MCF 10A (cell line): ENCODE measurements at regions of chr22 and their contacts with region 1.

Region 1: GRCh38 chr22:29603358-29604075 is at the start of gene NF2:
- DNase-seq: peak; percentile 41
- H3K4me3 Mint-ChIP-seq: peak within 1 kb of the TSS; percentile 87
- H3K27ac Mint-ChIP-seq: peak within 1 kb of the TSS; percentile 98
- H3K4me1 Mint-ChIP-seq: peaks cover 5% of the 10 kb centered on the region
- H3K27me3 Mint-ChIP-seq: no peaks in the 10 kb centered on the region
- CTCF ChIP-seq: no peak
- total RNA-seq, gene NF2: 92.4 and 98.3 TPM in 2 replicates

Region 2: GRCh38 chr22:29108109-29108508 is 495.4 kb before region 1 on chr22:
- CTCF ChIA-PET with region 1: no interaction called
- POLR2A ChIA-PET with region 1: no interaction called
- intact Hi-C with region 1: no loop called
- DNase-seq: peak; percentile 40
- H3K4me3 Mint-ChIP-seq: no peak overlapping the region
- H3K27ac Mint-ChIP-seq: no peak overlapping the region
- H3K4me1 Mint-ChIP-seq: no peaks in the 10 kb centered on the region
- H3K27me3 Mint-ChIP-seq: no peaks in the 10 kb centered on the region
- CTCF ChIP-seq: no peak

Region 3: GRCh38 chr22:29300807-29301601 is 302.5 kb before region 1 on chr22:
- CTCF ChIA-PET with region 1: no interaction called
- POLR2A ChIA-PET with region 1: no interaction called
- intact Hi-C with region 1: no loop called
- DNase-seq: peak; percentile 22
- H3K4me3 Mint-ChIP-seq: no peak overlapping the region
- H3K27ac Mint-ChIP-seq: no peak overlapping the region
- H3K4me1 Mint-ChIP-seq: peaks cover 7% of the 10 kb centered on the region
- H3K27me3 Mint-ChIP-seq: no peaks in the 10 kb centered on the region
- CTCF ChIP-seq: no peak

Region 4: DNA sequence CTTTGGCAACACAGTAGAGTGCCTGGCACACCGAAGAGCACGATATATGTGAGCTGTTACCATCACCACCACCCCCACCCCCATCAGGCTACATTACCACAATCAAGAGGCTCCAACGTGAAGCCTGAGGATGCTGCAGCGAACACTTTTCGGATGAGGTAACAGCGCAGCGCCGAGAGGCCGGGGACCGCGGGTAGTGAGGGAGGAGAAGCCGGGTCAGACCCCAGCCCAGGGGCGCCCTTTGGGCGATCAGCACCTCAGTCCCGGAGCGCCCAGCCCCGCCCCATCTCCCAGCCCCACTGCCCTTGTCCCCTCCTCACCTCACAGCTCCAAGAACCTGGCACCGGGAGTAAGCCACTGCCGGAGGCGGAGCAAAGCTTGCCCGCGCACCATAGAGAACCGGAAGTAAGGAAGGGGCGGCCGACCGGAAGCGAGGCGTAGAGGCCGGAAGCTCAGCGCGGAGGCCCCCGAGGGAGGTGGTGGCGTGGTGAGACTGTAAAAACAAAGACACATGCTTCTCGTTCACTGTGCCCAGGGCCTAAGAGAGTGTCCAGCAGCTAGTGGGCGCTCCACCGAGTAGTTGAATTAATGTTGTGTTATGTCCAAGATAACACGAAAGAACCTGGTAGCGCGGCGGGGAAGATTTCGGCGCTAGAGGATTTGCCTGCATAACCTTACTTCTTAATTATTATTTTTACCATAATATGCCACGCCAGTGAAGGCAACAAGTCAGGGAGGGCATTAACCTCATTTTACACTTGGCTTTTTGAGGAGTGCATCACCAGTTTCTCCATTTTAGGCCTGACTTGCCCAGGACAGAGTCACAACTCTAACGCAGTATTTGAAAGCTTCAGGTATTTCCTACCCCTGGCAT is 49.9 kb before region 1 on chr22 and contains the start of gene THOC5:
- CTCF ChIA-PET with region 1: no interaction called
- POLR2A ChIA-PET with region 1: interaction called, 27 read pairs
- intact Hi-C with region 1: loop called (anchors 2 kb)
- DNase-seq: peak; percentile 97
- H3K4me3 Mint-ChIP-seq: peak within 1 kb of the TSS; percentile 82
- H3K27ac Mint-ChIP-seq: peak within 1 kb of the TSS; percentile 90
- H3K4me1 Mint-ChIP-seq: peaks cover 19% of the 10 kb centered on the region
- H3K27me3 Mint-ChIP-seq: no peaks in the 10 kb centered on the region
- CTCF ChIP-seq: peak; percentile 23
- total RNA-seq, gene THOC5: 50.3 and 51.3 TPM in 2 replicates

Region 5: GRCh38 chr22:29587938-29588699 is 15.4 kb before region 1 on chr22:
- CTCF ChIA-PET with region 1: interaction called, 13 read pairs
- POLR2A ChIA-PET with region 1: interaction called, 7 read pairs
- intact Hi-C with region 1: no loop called
- DNase-seq: peak; percentile 92
- H3K4me3 Mint-ChIP-seq: no peak overlapping the region
- H3K27ac Mint-ChIP-seq: no peak overlapping the region
- H3K4me1 Mint-ChIP-seq: no peaks in the 10 kb centered on the region
- H3K27me3 Mint-ChIP-seq: no peaks in the 10 kb centered on the region
- CTCF ChIP-seq: no peak

Region 6: GRCh38 chr22:29617922-29618629 is 14.6 kb after region 1 on chr22:
- CTCF ChIA-PET with region 1: interaction called, 13 read pairs
- POLR2A ChIA-PET with region 1: interaction called, 21 read pairs
- intact Hi-C with region 1: no loop called
- DNase-seq: peak; percentile 32
- H3K4me3 Mint-ChIP-seq: no peak overlapping the region
- H3K27ac Mint-ChIP-seq: peak overlapping the region; percentile 2
- H3K4me1 Mint-ChIP-seq: peaks cover 31% of the 10 kb centered on the region
- H3K27me3 Mint-ChIP-seq: no peaks in the 10 kb centered on the region
- CTCF ChIP-seq: no peak

Region 7: DNA sequence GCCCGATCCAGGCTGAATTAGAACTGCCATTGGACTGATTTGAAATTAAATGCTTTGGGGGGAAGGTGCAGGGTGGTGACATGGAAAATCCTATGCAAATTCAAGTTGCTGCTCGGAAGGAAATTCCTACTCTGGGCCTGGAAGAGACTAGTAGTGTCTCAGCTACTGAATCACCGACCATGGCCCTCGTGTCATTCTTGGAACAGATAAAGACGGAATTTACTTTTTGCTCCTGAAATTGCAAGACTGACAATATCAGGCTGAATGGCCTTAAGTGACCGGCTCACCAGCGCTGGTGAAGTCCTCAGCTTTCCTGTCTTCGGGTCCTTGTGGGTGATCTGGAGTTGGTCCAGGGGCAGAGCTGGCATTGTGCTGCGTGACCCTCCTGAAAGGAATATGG is 228.4 kb after region 1 on chr22:
- CTCF ChIA-PET with region 1: no interaction called
- POLR2A ChIA-PET with region 1: no interaction called
- intact Hi-C with region 1: no loop called
- DNase-seq: no peak
- H3K4me3 Mint-ChIP-seq: no peak overlapping the region
- H3K27ac Mint-ChIP-seq: no peak overlapping the region
- H3K4me1 Mint-ChIP-seq: peaks cover 14% of the 10 kb centered on the region
- H3K27me3 Mint-ChIP-seq: no peaks in the 10 kb centered on the region
- CTCF ChIP-seq: no peak